ENCODE measurements at regions of chr17 and their contacts with region 1.

Region 1: GRCh38 chr17:40317880-40318829 is 9.2 kb downstream of the RARA start:
- DNase-seq: peak; percentile 95
- ATAC-seq: peak; percentile 67
- H3K4me3 ChIP-seq: peak overlapping the region; percentile 87 to 100 (median 93)
- H3K4me3 Mint-ChIP-seq: peak overlapping the region; percentile 97
- H3K27ac ChIP-seq: peak overlapping the region; percentile 95 to 96
- H3K27ac Mint-ChIP-seq: peak overlapping the region; percentile 100
- H3K4me1 ChIP-seq: peaks cover 56 to 78% of the 10 kb centered on the region in 2 donors
- H3K4me1 Mint-ChIP-seq: peaks cover 80% of the 10 kb centered on the region
- H3K27me3 ChIP-seq: no peaks in the 10 kb centered on the region
- H3K27me3 Mint-ChIP-seq: no peaks in the 10 kb centered on the region
- CTCF ChIP-seq: no peak

Region 2: GRCh38 chr17:40264458-40265185 is 53.5 kb before region 1 on chr17:
- CTCF ChIA-PET with region 1: no interaction called
- POLR2A ChIA-PET with region 1: interaction called, 10 read pairs
- intact Hi-C with region 1: no loop called
- DNase-seq: no peak
- ATAC-seq: no peak
- H3K4me3 ChIP-seq: no peak overlapping the region
- H3K4me3 Mint-ChIP-seq: no peak overlapping the region
- H3K27ac ChIP-seq: no peak overlapping the region
- H3K27ac Mint-ChIP-seq: peak overlapping the region; percentile 50
- H3K4me1 ChIP-seq: no peaks in the 10 kb centered on the region
- H3K4me1 Mint-ChIP-seq: no peaks in the 10 kb centered on the region
- H3K27me3 ChIP-seq: no peaks in the 10 kb centered on the region
- H3K27me3 Mint-ChIP-seq: no peaks in the 10 kb centered on the region
- CTCF ChIP-seq: no peak

Region 3: GRCh38 chr17:40287494-40288369 is 30.4 kb before region 1 on chr17 and contains the start of gene CDC6:
- CTCF ChIA-PET with region 1: interaction called, 3 read pairs
- POLR2A ChIA-PET with region 1: interaction called, 7 read pairs
- intact Hi-C with region 1: loop called (anchors 1 kb)
- DNase-seq: peak; percentile 99
- ATAC-seq: peak; percentile 95
- H3K4me3 ChIP-seq: peak within 1 kb of the TSS; percentile 27 to 85 (median 69)
- H3K4me3 Mint-ChIP-seq: peak within 1 kb of the TSS; percentile 97
- H3K27ac ChIP-seq: peak within 1 kb of the TSS in 1 of 2 donors; percentile 42
- H3K27ac Mint-ChIP-seq: peak within 1 kb of the TSS; percentile 70
- H3K4me1 ChIP-seq: peaks cover 9 to 11% of the 10 kb centered on the region in 2 donors
- H3K4me1 Mint-ChIP-seq: peaks cover 15% of the 10 kb centered on the region
- H3K27me3 ChIP-seq: no peaks in the 10 kb centered on the region
- H3K27me3 Mint-ChIP-seq: no peaks in the 10 kb centered on the region
- CTCF ChIP-seq: no peak
- total RNA-seq, gene CDC6: 0.63 and 2.2 TPM in 2 replicates

Region 4: DNA sequence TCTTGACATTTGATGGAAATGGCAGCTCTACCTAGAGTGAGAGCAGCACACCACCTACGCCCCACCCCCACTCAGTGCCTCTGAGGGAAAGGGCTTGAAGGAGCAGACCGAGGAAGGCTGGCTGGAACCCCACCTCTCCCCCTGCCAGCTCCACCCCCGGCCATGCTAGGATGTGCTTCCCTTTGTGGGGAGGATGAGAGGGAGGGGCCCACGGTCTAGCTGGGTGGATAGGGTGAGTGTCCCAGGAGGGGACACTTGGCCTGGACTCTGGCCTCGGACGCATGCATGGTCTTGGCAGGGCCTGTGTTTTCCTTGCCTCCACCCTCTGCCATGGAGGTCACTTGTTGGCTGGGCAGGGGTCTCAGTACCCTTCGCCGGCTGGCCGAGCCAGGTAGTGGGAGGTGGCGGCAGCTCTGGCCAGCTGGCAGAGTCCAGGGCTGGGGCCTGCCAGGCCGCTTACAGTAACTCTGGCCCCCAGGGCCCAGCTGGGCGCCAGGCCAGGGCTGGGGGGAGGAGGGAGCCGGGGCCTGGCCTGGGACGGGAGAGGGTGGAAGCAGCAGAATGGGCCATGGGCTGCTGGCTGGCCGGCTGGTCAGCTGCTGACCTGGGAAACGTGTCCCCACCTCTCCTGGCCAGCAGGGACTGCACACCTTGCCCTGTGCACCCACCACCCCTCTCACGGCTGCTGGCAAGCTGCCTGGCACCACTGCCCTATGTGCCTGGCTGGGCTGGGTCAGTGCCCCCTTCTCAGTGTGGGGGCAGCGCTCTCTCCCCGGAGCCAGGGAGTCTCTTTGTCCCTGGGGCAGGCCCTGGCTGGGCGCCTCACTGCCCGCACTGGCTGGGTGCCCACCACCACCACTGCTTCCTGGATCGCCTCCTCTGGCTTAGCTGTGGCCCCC is 13.8 kb after region 1 on chr17:
- CTCF ChIA-PET with region 1: interaction called, 10 read pairs
- POLR2A ChIA-PET with region 1: interaction called, 20 read pairs
- intact Hi-C with region 1: no loop called
- DNase-seq: no peak
- ATAC-seq: no peak
- H3K4me3 ChIP-seq: no peak overlapping the region
- H3K4me3 Mint-ChIP-seq: peak overlapping the region; percentile 40
- H3K27ac ChIP-seq: no peak overlapping the region
- H3K27ac Mint-ChIP-seq: peak overlapping the region; percentile 50
- H3K4me1 ChIP-seq: peaks cover 67 to 86% of the 10 kb centered on the region in 2 donors
- H3K4me1 Mint-ChIP-seq: peaks cover 72% of the 10 kb centered on the region
- H3K27me3 ChIP-seq: no peaks in the 10 kb centered on the region
- H3K27me3 Mint-ChIP-seq: no peaks in the 10 kb centered on the region
- CTCF ChIP-seq: no peak

Region 5: GRCh38 chr17:40340880-40341807 is 23.0 kb after region 1 on chr17:
- CTCF ChIA-PET with region 1: interaction called, 119 read pairs
- POLR2A ChIA-PET with region 1: interaction called, 96 read pairs
- intact Hi-C with region 1: loop called (anchors 1 kb)
- DNase-seq: peak; percentile 95
- ATAC-seq: peak; percentile 76
- H3K4me3 ChIP-seq: peak overlapping the region; percentile 51 to 84 (median 71)
- H3K4me3 Mint-ChIP-seq: peak overlapping the region; percentile 91
- H3K27ac ChIP-seq: peak overlapping the region; percentile 67 to 88
- H3K27ac Mint-ChIP-seq: peak overlapping the region; percentile 92
- H3K4me1 ChIP-seq: peaks cover 70 to 85% of the 10 kb centered on the region in 2 donors
- H3K4me1 Mint-ChIP-seq: peaks cover 74% of the 10 kb centered on the region
- H3K27me3 ChIP-seq: no peaks in the 10 kb centered on the region
- H3K27me3 Mint-ChIP-seq: no peaks in the 10 kb centered on the region
- CTCF ChIP-seq: no peak

Region 6: GRCh38 chr17:40349920-40350909 is 32.1 kb after region 1 on chr17:
- CTCF ChIA-PET with region 1: interaction called, 871 read pairs
- POLR2A ChIA-PET with region 1: interaction called, 96 read pairs
- intact Hi-C with region 1: loop called (anchors 1 kb)
- DNase-seq: peak; percentile 41
- ATAC-seq: no peak
- H3K4me3 ChIP-seq: no peak overlapping the region
- H3K4me3 Mint-ChIP-seq: no peak overlapping the region
- H3K27ac ChIP-seq: no peak overlapping the region
- H3K27ac Mint-ChIP-seq: peak overlapping the region; percentile 42
- H3K4me1 ChIP-seq: peaks cover 48 to 65% of the 10 kb centered on the region in 2 donors
- H3K4me1 Mint-ChIP-seq: peaks cover 74% of the 10 kb centered on the region
- H3K27me3 ChIP-seq: no peaks in the 10 kb centered on the region
- H3K27me3 Mint-ChIP-seq: no peaks in the 10 kb centered on the region
- CTCF ChIP-seq: no peak

Region 7: DNA sequence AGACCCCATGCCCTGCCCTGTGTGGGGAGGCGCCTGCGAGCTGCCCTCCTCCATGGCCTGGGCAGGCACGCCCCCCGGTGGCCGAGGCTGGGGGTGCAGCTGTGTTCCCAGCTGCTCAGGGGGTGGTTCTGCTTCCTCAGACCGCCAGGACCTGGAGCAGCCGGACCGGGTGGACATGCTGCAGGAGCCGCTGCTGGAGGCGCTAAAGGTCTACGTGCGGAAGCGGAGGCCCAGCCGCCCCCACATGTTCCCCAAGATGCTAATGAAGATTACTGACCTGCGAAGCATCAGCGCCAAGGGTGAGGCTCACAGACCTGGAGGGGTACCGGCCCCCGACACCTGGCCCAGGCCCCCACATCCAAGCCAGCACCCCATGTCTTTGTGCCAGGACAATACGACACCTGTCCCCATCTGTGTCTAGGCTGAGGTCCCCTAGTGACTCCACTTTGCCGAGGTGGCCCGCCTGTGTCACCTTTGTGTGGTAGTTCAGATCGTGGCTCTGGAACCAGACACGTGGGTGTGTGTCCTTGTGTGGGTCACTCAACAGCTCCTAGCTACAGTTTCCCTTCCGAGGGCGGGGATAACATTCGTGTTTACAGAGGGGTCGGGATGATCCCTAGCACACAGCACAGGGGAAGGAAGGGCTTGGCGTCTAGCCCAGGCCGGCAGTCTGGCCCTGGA is 37.1 kb after region 1 on chr17:
- CTCF ChIA-PET with region 1: interaction called, 871 read pairs
- POLR2A ChIA-PET with region 1: interaction called, 13 read pairs
- intact Hi-C with region 1: loop called (anchors 1 kb)
- DNase-seq: peak; percentile 86
- ATAC-seq: peak; percentile 72
- H3K4me3 ChIP-seq: no peak overlapping the region
- H3K4me3 Mint-ChIP-seq: no peak overlapping the region
- H3K27ac ChIP-seq: no peak overlapping the region
- H3K27ac Mint-ChIP-seq: peak overlapping the region; percentile 50
- H3K4me1 ChIP-seq: peaks cover 22 to 37% of the 10 kb centered on the region in 2 donors
- H3K4me1 Mint-ChIP-seq: peaks cover 36% of the 10 kb centered on the region
- H3K27me3 ChIP-seq: peaks cover 0 to 7% (median 0%) of the 10 kb centered on the region in 4 experiments
- H3K27me3 Mint-ChIP-seq: no peaks in the 10 kb centered on the region
- CTCF ChIP-seq: peak; percentile 98

Measured in B cell (primary cell).